ENCODE measurements at regions of chr12 and their contacts with region 1.

Region 1: GRCh38 chr12:49366652-49367380 is 446 bp upstream of the SPATS2 start:
- DNase-seq: peak; percentile 75 to 97 (median 96)
- ATAC-seq: peak; percentile 90
- H3K4me3 ChIP-seq: peak overlapping the region; percentile 75
- H3K27ac ChIP-seq: peak overlapping the region; percentile 96
- H3K4me1 ChIP-seq: peaks cover 12 to 25% of the 10 kb centered on the region in 2 experiments; a peak in 3 of 5 replicates
- H3K27me3 ChIP-seq: no peaks in the 10 kb centered on the region
- CTCF ChIP-seq: peak in 2 of 3 experiments; percentile 34 to 35; a peak in 2 of 6 replicates
- EP300 ChIP-seq: no peak
- POLR2A ChIP-seq: peak; percentile 97
- RAD21 ChIP-seq: no peak; a peak in 1 of 4 replicates

Region 2: DNA sequence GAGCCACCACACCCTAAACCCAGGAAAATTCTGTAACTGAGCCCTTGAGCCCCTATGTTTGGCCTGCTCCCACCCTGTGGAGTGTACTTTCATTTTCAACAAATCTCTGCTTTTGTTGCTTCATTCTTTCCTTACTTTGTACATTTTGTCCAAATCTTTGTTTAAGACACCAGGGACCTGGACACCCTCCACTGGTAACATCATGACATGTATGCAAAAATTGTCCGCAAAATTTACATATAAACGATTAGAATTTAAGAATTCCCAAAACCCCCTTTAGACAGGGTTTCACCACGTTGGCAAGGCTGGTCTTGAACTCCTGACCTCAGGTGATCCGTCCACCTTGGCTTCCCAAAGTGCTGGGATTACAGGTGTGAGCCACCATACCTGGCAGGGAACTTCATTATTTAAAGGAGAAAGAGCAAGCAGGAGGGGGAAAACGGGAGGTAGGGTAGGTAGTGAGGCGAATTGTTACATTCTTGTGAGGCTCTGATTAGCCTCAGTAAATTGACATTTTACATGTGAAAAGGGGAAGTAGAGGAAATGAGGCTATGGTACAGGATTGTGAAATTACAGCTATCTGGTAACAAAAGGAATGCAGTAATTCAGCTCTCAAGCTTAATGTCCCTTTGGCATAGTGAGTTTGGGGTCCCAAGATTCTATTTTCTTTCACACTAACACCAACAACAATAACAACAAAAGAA is 205.6 kb before region 1 on chr12:
- CTCF ChIA-PET with region 1: no interaction called
- POLR2A ChIA-PET with region 1: no interaction called
- in situ Hi-C with region 1: no loop called
- intact Hi-C with region 1: no loop called
- DNase-seq: peak in 1 of 4 experiments; percentile 7
- ATAC-seq: no peak; the same call in 2 of the 3 replicates
- H3K4me3 ChIP-seq: no peak overlapping the region
- H3K27ac ChIP-seq: no peak overlapping the region
- H3K4me1 ChIP-seq: peaks cover 5 to 6% of the 10 kb centered on the region in 2 experiments; a peak in 3 of 5 replicates
- H3K27me3 ChIP-seq: no peaks in the 10 kb centered on the region
- CTCF ChIP-seq: no peak
- EP300 ChIP-seq: no peak
- POLR2A ChIP-seq: peak; percentile 88
- RAD21 ChIP-seq: no peak

Region 3: DNA sequence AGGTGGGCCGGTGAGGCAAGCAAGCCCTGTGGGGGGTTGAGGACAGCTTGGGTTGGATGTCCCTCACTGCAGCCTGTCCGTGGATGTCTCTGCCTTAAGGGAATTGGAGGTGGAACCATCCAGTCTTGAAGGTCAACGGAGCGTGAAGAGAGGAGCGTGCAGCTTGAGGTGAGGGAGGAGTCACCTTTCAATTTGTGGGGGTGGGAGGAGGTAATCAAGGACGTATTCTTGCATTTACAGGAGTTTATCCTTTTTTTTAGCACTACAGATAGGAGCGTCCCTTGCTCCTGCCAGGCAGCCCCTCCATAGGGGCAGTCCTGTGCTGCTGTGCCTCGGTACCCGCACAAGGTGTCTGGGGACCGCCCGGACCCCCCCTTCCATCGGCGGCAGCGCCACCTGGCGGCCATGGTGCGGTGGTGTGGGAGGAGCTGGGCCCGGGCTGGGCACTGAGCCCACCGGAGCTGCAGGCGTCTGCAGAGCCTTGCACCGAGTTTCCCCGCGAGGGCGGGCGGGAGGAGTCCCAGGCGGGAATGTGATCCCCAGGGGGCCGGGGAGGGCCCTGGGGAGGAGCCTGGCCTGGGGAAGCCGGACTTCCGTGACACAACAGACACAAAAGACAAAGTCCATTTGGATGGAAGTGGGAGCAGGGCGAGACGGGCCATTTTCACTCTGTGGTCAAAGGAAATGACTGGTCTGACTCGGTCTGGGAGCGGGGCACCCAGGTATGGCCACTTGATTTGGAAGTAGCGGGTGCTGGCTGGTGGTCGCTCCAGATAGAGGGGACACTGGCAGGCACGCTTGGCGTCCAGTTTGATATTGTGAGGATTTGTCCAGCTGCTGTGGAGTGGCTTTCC is 19.2 kb before region 1 on chr12:
- CTCF ChIA-PET with region 1: no interaction called
- POLR2A ChIA-PET with region 1: interaction called, 11 read pairs
- in situ Hi-C with region 1: no loop called
- intact Hi-C with region 1: no loop called
- DNase-seq: peak; percentile 77 to 93 (median 91)
- ATAC-seq: peak; percentile 89
- H3K4me3 ChIP-seq: peak overlapping the region; percentile 36
- H3K27ac ChIP-seq: no peak overlapping the region; the same call in 2 of the 3 replicates
- H3K4me1 ChIP-seq: peaks cover 22 to 42% of the 10 kb centered on the region in 2 experiments
- H3K27me3 ChIP-seq: peaks cover 27 to 42% of the 10 kb centered on the region in 2 experiments; a peak in 4 of 5 replicates
- CTCF ChIP-seq: peak; percentile 75 to 93 (median 92)
- EP300 ChIP-seq: no peak
- POLR2A ChIP-seq: no peak
- RAD21 ChIP-seq: peak; percentile 46 to 60; a peak in 3 of 4 replicates

Region 4: DNA sequence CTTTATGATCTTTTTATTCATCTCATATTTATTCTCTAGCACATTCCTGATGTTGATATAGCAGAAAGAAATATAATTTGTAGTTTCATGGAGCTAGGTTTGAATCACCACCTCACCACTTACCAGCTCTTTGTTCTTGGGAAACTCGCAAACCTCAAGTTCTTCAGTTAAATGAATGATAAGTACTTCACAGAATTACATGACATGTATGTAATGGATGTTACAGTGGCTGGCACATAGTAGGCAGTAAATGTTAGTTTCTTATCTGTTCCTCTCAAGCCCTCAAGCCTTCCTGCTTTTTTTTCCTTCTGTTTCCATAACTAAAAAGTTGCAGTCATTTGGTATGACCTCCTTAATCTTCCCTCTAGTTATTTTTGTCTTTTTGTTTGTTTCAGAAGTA is 55.3 kb after region 1 on chr12:
- CTCF ChIA-PET with region 1: no interaction called
- POLR2A ChIA-PET with region 1: interaction called, 3 read pairs
- in situ Hi-C with region 1: no loop called
- intact Hi-C with region 1: loop called (anchors 5 kb)
- DNase-seq: peak in 1 of 4 experiments; percentile 45
- ATAC-seq: peak; percentile 38; the same call in 2 of the 3 replicates
- H3K4me3 ChIP-seq: no peak overlapping the region
- H3K27ac ChIP-seq: 0 out of 3 replicates have a peak overlapping the region, but pooled peaks have one; percentile 10
- H3K4me1 ChIP-seq: peaks cover 9 to 16% of the 10 kb centered on the region in 2 experiments; a peak in 4 of 5 replicates
- H3K27me3 ChIP-seq: no peaks in the 10 kb centered on the region
- CTCF ChIP-seq: no peak
- EP300 ChIP-seq: 0 out of 2 replicates have a peak, but pooled peaks have one; percentile 20
- POLR2A ChIP-seq: no peak
- RAD21 ChIP-seq: no peak

Region 5: GRCh38 chr12:49515266-49515665 is 148.4 kb after region 1 on chr12:
- CTCF ChIA-PET with region 1: interaction called, 185 read pairs
- POLR2A ChIA-PET with region 1: interaction called, 9 read pairs
- in situ Hi-C with region 1: loop called (anchors 5 kb)
- intact Hi-C with region 1: no loop called
- DNase-seq: no peak
- ATAC-seq: no peak
- H3K4me3 ChIP-seq: no peak overlapping the region
- H3K27ac ChIP-seq: no peak overlapping the region
- H3K4me1 ChIP-seq: no peaks in the 10 kb centered on the region
- H3K27me3 ChIP-seq: no peaks in the 10 kb centered on the region
- CTCF ChIP-seq: no peak
- EP300 ChIP-seq: no peak
- POLR2A ChIP-seq: no peak
- RAD21 ChIP-seq: no peak

Measured in K562 (cell line).